Common myeloid progenitor, CD34-positive (primary cell): ENCODE measurements at regions of chr1 and their contacts with region 1.

Region 1: GRCh38 chr1:91511386-91511785 is 10.7 kb downstream of the CDC7 start:
- DNase-seq: peak; percentile 54 to 68 (median 64)
- H3K4me3 ChIP-seq: no peak overlapping the region
- H3K27ac ChIP-seq: no peak overlapping the region
- H3K4me1 ChIP-seq: no peaks in the 10 kb centered on the region
- H3K27me3 ChIP-seq: no peaks in the 10 kb centered on the region

Region 2: GRCh38 chr1:91282695-91283420 is 228.5 kb before region 1 on chr1:
- CTCF ChIA-PET with region 1: interaction called, 13 read pairs
- POLR2A ChIA-PET with region 1: no interaction called
- DNase-seq: peak; percentile 69 to 85 (median 81)
- H3K4me3 ChIP-seq: peak overlapping the region in 3 of 7 experiments; percentile 32 to 64 (median 49)
- H3K27ac ChIP-seq: no peak overlapping the region
- H3K4me1 ChIP-seq: peaks cover 0 to 10% (median 2%) of the 10 kb centered on the region in 4 experiments
- H3K27me3 ChIP-seq: no peaks in the 10 kb centered on the region

Region 3: GRCh38 chr1:91500756-91501522 is 10.4 kb before region 1 on chr1 and contains the start of gene CDC7:
- CTCF ChIA-PET with region 1: interaction called, 45 read pairs
- POLR2A ChIA-PET with region 1: no interaction called
- DNase-seq: peak; percentile 88 to 92 (median 89)
- H3K4me3 ChIP-seq: peak within 1 kb of the TSS; percentile 80 to 97 (median 92)
- H3K27ac ChIP-seq: peak within 1 kb of the TSS; percentile 80 to 86
- H3K4me1 ChIP-seq: peaks cover 15 to 57% (median 25%) of the 10 kb centered on the region in 4 experiments
- H3K27me3 ChIP-seq: no peaks in the 10 kb centered on the region

Region 4: GRCh38 chr1:91523482-91523881 is 12.1 kb after region 1 on chr1:
- CTCF ChIA-PET with region 1: interaction called, 10 read pairs
- POLR2A ChIA-PET with region 1: no interaction called
- DNase-seq: no peak
- H3K4me3 ChIP-seq: no peak overlapping the region
- H3K27ac ChIP-seq: no peak overlapping the region
- H3K4me1 ChIP-seq: no peaks in the 10 kb centered on the region
- H3K27me3 ChIP-seq: no peaks in the 10 kb centered on the region

Region 5: DNA sequence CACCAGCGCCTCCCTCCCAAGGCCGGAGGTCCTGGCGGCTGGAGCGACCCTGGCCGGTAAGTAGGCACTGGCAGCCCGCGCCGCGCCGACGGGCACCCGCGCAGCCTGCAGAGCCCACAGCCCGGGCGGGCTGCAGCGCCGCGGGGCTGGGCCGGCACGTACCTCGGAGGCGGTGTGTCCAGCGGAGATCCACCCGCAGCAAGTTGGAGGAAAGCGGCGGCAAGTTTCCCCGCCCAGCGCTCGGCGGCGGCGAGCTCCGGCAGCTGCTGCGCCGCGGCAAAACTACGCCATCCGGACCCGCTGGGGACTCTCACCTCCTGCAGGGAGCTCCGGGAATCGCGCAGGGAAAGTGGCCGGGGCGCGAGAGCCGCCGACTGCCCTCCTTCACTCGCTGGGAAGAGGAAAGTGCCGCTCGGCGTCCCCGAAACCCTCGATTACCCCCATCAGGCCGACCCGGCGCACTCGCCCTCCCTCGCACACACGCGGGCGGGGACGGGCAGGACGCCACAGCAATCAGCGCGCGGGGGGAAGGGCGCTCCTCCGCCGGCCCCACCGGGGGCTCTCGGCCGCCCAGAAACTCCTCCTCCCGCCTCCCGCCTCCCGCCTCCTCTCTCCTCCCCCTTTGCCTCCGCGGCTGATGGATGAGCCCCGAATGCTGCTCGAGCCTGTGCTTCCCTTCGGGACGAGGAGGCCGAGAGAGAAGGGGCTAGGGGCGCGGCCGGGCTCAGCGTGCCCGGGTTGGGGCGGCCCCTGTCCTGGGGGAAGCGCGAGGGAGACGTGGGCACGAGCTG is 374.5 kb after region 1 on chr1 and contains the start of gene TGFBR3:
- CTCF ChIA-PET with region 1: interaction called, 22 read pairs
- POLR2A ChIA-PET with region 1: no interaction called
- DNase-seq: peak; percentile 44 to 70 (median 55)
- H3K4me3 ChIP-seq: peak within 1 kb of the TSS; percentile 13 to 83 (median 77)
- H3K27ac ChIP-seq: no peak within 1 kb of the TSS
- H3K4me1 ChIP-seq: peaks cover 0 to 21% (median 21%) of the 10 kb centered on the region in 4 experiments
- H3K27me3 ChIP-seq: peaks cover 0 to 52% (median 26%) of the 10 kb centered on the region in 5 experiments

Region 6: DNA sequence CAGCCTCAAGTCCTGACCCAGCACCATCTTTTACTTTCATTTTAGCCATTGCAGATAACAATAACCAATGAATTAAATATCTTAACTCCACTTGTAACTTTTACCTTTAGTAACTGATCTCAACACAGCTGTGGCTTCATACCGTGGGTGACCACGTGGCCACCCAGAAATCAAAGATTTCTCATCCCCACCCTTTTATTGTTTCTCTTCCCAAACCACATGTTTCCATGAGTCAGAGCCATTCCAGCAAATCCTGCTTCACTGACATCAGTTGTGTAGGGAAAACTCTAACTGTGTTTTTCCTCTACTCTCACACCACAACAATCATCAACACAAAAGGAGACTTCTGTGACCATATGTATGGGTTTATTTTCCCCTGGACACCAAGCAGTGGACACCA is 412.8 kb after region 1 on chr1:
- CTCF ChIA-PET with region 1: interaction called, 179 read pairs
- POLR2A ChIA-PET with region 1: no interaction called
- DNase-seq: no peak
- H3K4me3 ChIP-seq: no peak overlapping the region
- H3K27ac ChIP-seq: no peak overlapping the region
- H3K4me1 ChIP-seq: no peaks in the 10 kb centered on the region
- H3K27me3 ChIP-seq: no peaks in the 10 kb centered on the region